BJ (cell line): ENCODE measurements at regions of chr11 and their contacts with region 1.

Region 1: DNA sequence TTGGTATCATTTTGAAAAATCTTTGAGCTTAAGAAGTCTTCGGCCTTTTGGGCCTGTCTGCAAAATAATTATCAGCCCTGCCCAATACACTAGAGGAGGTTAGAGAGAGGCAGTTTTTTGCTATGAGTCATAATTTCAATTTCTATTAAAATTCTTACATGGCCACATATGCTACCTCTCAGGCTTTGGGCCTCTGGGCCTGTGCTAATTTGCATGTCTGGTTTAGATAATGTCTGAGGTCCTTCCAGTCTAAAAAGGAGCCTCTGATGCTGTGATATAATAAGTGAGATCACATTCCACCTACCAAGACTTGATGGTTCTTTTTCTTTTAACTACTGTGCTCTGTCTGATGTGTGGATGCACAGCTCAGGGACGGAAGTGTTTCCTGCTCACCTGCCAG is 70.8 kb downstream of the KCNJ1 start:
- DNase-seq: peak; percentile 51
- H3K4me3 ChIP-seq: no peak overlapping the region
- H3K27me3 ChIP-seq: no peaks in the 10 kb centered on the region
- CTCF ChIP-seq: no peak

Region 2: DNA sequence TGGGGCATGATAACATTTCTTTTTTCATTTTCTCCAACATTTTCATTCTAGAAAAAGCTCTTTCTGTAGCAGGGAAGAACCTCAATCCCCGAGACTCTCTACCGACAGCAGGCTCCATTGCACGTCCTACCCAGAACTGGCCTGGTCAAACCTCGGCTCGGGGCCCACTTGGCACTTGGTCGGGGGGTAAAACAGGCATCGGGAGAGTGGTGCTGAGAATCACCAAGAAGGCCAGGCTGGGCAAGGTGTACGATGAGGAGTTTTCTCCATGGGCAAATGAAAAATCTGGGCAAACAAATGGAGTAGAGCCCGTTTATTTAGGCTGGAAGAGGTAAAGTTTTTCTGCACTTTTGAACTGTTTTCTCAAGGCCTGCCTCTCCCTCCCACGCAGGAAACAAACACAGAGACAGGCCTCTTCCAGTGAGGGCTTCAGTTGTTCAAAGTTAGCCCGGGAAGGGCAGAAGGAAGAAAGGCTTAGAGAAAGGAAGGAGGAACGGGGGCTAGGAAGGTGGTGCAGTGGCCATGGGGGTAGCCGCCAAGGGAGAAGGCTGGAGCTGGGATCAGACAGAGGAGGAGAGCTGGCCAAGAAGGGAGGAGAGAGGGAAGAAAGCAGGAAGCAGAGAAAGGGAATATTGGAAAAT is 296.5 kb before region 1 on chr11:
- CTCF ChIA-PET with region 1: no interaction called
- POLR2A ChIA-PET with region 1: interaction called, 12 read pairs
- DNase-seq: no peak
- H3K4me3 ChIP-seq: no peak overlapping the region
- H3K27me3 ChIP-seq: no peaks in the 10 kb centered on the region
- CTCF ChIP-seq: no peak

Region 3: GRCh38 chr11:128776424-128777284 is 19.6 kb before region 1 on chr11:
- CTCF ChIA-PET with region 1: no interaction called
- POLR2A ChIA-PET with region 1: no interaction called
- DNase-seq: no peak
- H3K4me3 ChIP-seq: no peak overlapping the region
- H3K27me3 ChIP-seq: no peaks in the 10 kb centered on the region
- CTCF ChIP-seq: peak; percentile 34